ENCODE measurements at regions of chr1 and their contacts with region 1.

Region 1: DNA sequence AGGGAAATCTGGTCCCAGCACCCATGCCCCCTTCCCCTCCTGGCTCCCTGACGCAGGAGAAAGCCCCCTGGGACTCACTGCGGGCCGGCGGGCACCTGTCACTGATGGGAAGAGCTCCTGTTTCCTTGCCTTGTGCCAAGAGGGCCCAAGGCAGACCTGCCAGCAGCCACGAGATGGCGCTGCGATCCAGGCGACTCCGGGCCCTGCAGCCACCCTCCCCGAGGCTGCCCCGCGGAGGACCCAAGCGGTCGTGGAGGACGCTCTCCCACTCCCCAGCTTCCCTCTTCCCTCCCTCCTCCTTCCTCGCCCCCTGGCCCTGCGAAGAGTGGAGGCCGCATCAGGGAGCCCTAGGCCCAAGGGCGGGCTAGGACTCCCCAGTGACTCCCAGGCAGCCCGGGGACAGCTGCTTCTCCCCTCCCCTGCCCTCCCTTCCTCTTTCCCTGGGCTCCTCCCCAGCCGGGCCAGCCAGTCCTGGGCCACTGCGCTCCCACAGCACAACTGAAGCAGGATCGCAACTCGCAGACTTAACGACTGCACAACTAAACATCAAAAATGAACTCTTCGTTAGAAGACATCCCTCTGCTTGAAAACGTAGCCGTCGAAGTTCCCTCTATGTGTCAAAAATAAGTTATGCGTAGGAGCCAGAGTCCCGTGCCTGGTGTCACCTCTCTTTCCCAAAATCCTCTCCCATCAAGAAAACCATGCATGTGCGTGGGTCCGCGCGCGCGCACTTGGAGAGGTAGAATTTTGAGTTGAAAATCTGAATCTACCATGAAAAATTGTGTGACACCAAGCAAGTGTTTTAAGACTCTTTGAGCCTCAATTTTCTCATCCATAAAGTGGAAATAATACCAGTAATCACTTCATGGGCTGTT is 34.2 kb downstream of the BATF3 start:
- DNase-seq: peak; percentile 85 to 87
- ATAC-seq: peak; percentile 94 to 99 (median 96)
- H3K4me3 ChIP-seq: peak overlapping the region; percentile 33 to 71 (median 64)
- H3K27ac ChIP-seq: peak overlapping the region in 9 of 10 donors; percentile 79 to 93 (median 81)
- H3K4me1 ChIP-seq: peaks cover 0 to 58% (median 31%) of the 10 kb centered on the region in 9 donors
- H3K27me3 ChIP-seq: no peaks in the 10 kb centered on the region
- CTCF ChIP-seq: peak; percentile 90 to 99 (median 96)

Region 2: GRCh38 chr1:212699104-212699624 is 33.7 kb after region 1 on chr1:
- intact Hi-C with region 1: loop called in 1 of 10 experiments (anchors 2 kb)
- DNase-seq: peak in 1 of 2 donors; percentile 37
- ATAC-seq: peak; percentile 24 to 66 (median 51)
- H3K4me3 ChIP-seq: peak overlapping the region; percentile 50 to 72 (median 66)
- H3K27ac ChIP-seq: peak overlapping the region in 7 of 10 donors; percentile 21 to 90 (median 73)
- H3K4me1 ChIP-seq: peaks cover 5 to 33% (median 24%) of the 10 kb centered on the region in 9 donors
- H3K27me3 ChIP-seq: peaks cover 0 to 49% (median 9%) of the 10 kb centered on the region in 7 donors
- CTCF ChIP-seq: peak in 8 of 9 donors; percentile 13 to 68 (median 49)

Region 3: GRCh38 chr1:212782422-212783154 is 117.1 kb after region 1 on chr1:
- intact Hi-C with region 1: loop called in 9 of 10 experiments (anchors 1 to 10 kb)
- DNase-seq: no peak
- ATAC-seq: peak in 3 of 8 donors; percentile 53 to 59 (median 57)
- H3K4me3 ChIP-seq: no peak overlapping the region
- H3K27ac ChIP-seq: peak overlapping the region in 1 of 10 donors; percentile 28
- H3K4me1 ChIP-seq: peaks cover 0 to 17% (median 0%) of the 10 kb centered on the region in 9 donors
- H3K27me3 ChIP-seq: no peaks in the 10 kb centered on the region
- CTCF ChIP-seq: peak; percentile 39 to 69 (median 64)

Region 4: DNA sequence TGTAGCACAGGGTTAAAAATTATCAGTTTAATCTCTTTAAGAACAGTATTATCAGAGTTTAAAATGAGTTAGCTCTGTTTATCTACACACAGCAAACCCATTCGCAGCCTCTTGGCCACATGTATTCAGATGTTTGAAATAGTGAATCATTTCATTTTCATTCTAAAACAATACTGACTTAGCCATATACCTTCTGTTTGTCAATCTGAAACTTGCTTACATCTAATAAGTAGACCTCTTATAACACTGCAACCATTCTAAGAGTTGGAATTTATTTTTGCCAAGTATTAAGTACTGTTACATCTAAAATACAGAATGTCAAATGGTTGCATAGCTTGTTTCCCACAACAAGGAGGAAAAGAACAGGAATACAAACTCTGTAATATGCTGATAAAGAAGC is 324.8 kb after region 1 on chr1:
- intact Hi-C with region 1: loop called in 4 of 10 experiments (anchors 2 to 10 kb)
- DNase-seq: no peak
- ATAC-seq: no peak
- H3K4me3 ChIP-seq: no peak overlapping the region
- H3K27ac ChIP-seq: no peak overlapping the region
- H3K4me1 ChIP-seq: peaks cover 0 to 8% (median 0%) of the 10 kb centered on the region in 9 donors
- H3K27me3 ChIP-seq: no peaks in the 10 kb centered on the region
- CTCF ChIP-seq: no peak

Measured in heart right ventricle (tissue), 16 donors.